ENCODE measurements at regions of chr14 and their contacts with region 1.

Region 1: GRCh38 chr14:34722717-34723545 is 8.5 kb upstream of the CFL2 start:
- DNase-seq: peak; percentile 48
- H3K4me3 Mint-ChIP-seq: no peak overlapping the region
- H3K27ac Mint-ChIP-seq: no peak overlapping the region
- H3K4me1 Mint-ChIP-seq: peaks cover 8% of the 10 kb centered on the region
- H3K27me3 Mint-ChIP-seq: peaks cover 1% of the 10 kb centered on the region

Region 2: DNA sequence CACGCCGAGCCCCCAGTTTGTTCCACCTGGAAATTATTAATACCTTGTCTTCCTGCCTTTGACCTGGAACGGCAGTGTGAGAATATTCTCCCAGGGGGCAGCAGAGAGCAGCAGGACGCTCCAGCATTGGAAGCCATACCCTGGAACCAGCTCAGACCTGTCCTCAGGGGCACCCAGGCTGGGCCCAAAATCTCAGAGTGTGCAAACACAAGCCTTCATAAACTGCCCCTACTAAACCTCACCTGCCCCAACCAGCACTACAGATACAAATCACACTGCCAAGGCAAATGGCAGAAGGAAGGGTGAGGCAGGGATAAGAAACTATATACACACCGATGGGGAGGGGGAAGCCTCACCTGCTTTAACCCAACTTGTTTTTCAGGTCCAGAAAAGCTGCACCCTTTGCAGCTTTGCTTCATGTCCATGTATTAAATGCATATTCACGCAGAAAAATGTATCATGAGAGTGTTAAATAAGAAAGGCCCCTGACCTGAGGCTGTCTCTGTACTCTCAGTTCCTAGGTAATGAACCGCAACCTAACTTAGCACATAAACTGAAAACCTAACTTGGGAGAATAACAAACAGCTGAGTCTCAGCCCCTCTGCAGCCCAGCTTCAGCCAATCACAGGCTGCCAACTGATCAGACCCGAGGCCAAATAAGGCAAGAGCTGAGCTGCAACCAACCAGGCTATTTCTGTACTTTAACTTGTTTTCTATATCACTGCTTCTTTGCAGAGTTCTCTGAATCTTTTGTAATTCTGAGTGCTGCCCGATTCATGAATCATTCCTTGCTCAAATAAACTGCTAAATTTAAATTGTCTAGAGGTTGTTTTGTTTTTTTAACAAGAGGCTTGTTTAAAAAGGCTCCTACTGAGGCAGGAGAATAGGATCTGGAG is 391.0 kb before region 1 on chr14:
- CTCF ChIA-PET with region 1: no interaction called
- POLR2A ChIA-PET with region 1: no interaction called
- intact Hi-C with region 1: loop called (anchors 5 kb)
- DNase-seq: peak; percentile 77
- H3K4me3 Mint-ChIP-seq: no peak overlapping the region
- H3K27ac Mint-ChIP-seq: no peak overlapping the region
- H3K4me1 Mint-ChIP-seq: peaks cover 10% of the 10 kb centered on the region
- H3K27me3 Mint-ChIP-seq: no peaks in the 10 kb centered on the region

Region 3: GRCh38 chr14:34671716-34672115 is 51.2 kb before region 1 on chr14:
- CTCF ChIA-PET with region 1: interaction called, 130 read pairs
- POLR2A ChIA-PET with region 1: no interaction called
- intact Hi-C with region 1: loop called (anchors 1 kb)
- DNase-seq: no peak
- H3K4me3 Mint-ChIP-seq: no peak overlapping the region
- H3K27ac Mint-ChIP-seq: no peak overlapping the region
- H3K4me1 Mint-ChIP-seq: peaks cover 3% of the 10 kb centered on the region
- H3K27me3 Mint-ChIP-seq: no peaks in the 10 kb centered on the region

Region 4: DNA sequence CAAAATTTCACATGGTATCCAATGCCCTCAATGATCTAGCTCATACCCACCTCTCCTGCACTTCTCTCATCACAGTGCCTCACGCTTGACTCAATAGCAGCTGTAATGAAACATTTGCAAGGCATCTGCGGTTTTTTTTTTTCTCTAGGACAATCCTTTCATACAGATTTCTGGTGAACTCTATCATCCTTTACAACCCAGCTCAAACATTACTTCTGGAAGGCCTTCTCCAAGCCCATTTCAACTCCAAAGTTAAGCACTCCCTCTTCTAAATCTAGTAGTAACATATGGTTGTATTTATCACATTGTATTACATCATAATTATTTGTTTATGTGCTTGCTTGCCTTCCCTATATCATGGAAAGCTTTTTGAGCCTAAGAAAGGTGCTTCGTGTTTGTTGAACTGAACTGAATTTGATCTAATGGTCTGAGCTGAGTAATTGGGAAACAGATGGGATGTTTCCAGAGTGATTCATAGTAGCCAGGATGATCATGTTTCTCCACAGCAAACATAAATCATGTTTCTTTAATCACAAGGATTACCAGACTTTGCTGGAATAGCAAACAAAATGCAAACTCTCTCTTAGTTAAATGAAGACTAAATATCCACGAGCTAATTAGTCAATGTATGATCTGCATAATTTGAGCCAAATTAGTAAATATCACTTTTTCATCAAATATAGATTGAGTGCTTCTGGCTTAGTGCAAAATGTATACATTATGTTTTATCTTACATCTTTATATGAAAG is 22.9 kb before region 1 on chr14:
- CTCF ChIA-PET with region 1: interaction called, 17 read pairs
- POLR2A ChIA-PET with region 1: interaction called, 7 read pairs
- intact Hi-C with region 1: no loop called
- DNase-seq: no peak
- H3K4me3 Mint-ChIP-seq: no peak overlapping the region
- H3K27ac Mint-ChIP-seq: no peak overlapping the region
- H3K4me1 Mint-ChIP-seq: peaks cover 5% of the 10 kb centered on the region
- H3K27me3 Mint-ChIP-seq: no peaks in the 10 kb centered on the region

Region 5: DNA sequence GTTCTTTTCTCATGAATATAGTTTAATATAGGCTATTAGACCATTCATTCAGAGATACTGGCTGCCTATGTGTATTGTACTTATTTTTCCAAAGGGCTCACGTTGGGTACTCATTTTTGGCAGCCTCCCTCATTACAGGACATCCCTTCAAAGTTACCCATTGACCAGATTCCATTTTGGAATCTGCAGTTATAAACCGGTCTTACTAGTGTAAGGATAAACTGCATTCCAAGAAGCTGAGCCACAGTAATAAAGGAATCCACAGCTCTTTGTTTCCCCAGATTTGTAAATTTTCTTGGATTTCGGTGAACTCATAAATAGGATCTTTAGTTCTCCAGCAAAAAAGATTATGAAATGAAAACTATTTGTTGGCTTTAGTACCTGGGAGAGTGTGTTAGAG is 10.3 kb after region 1 on chr14:
- CTCF ChIA-PET with region 1: interaction called, 25 read pairs
- POLR2A ChIA-PET with region 1: no interaction called
- intact Hi-C with region 1: no loop called
- DNase-seq: no peak
- H3K4me3 Mint-ChIP-seq: no peak overlapping the region
- H3K27ac Mint-ChIP-seq: no peak overlapping the region
- H3K4me1 Mint-ChIP-seq: no peaks in the 10 kb centered on the region
- H3K27me3 Mint-ChIP-seq: peaks cover 1% of the 10 kb centered on the region

Region 6: GRCh38 chr14:34741840-34742239 is 18.9 kb after region 1 on chr14:
- CTCF ChIA-PET with region 1: interaction called, 11 read pairs
- POLR2A ChIA-PET with region 1: no interaction called
- intact Hi-C with region 1: no loop called
- DNase-seq: no peak
- H3K4me3 Mint-ChIP-seq: no peak overlapping the region
- H3K27ac Mint-ChIP-seq: peak overlapping the region; percentile 11
- H3K4me1 Mint-ChIP-seq: peaks cover 18% of the 10 kb centered on the region
- H3K27me3 Mint-ChIP-seq: no peaks in the 10 kb centered on the region

Measured in activated CD4-positive, alpha-beta memory T cell treated with anti-CD3 and anti-CD28 coated beads for 36 hours (primary cell).